Prostate gland (tissue), 2 donors: ENCODE measurements at regions of chr15 and their contacts with region 1.

Region 1: GRCh38 chr15:64841258-64842095 is at the start of gene PLEKHO2:
- DNase-seq: peak; percentile 97
- H3K4me3 ChIP-seq: peak within 1 kb of the TSS; percentile 91 to 96
- H3K27ac ChIP-seq: peak within 1 kb of the TSS; percentile 91 to 93
- H3K4me1 ChIP-seq: peaks cover 12% of the 10 kb centered on the region
- H3K27me3 ChIP-seq: no peaks in the 10 kb centered on the region
- CTCF ChIP-seq: peak in 1 of 4 experiments; percentile 18
- POLR2A ChIP-seq: peak; percentile 80
- total RNA-seq, gene PLEKHO2: 8.6 to 31.8 TPM

Region 2: GRCh38 chr15:64187396-64188191 is 653.9 kb before region 1 on chr15:
- intact Hi-C with region 1: no loop called
- DNase-seq: no peak
- H3K4me3 ChIP-seq: no peak overlapping the region
- H3K27ac ChIP-seq: no peak overlapping the region
- H3K4me1 ChIP-seq: no peaks in the 10 kb centered on the region
- H3K27me3 ChIP-seq: no peaks in the 10 kb centered on the region
- CTCF ChIP-seq: no peak
- POLR2A ChIP-seq: no peak

Region 3: DNA sequence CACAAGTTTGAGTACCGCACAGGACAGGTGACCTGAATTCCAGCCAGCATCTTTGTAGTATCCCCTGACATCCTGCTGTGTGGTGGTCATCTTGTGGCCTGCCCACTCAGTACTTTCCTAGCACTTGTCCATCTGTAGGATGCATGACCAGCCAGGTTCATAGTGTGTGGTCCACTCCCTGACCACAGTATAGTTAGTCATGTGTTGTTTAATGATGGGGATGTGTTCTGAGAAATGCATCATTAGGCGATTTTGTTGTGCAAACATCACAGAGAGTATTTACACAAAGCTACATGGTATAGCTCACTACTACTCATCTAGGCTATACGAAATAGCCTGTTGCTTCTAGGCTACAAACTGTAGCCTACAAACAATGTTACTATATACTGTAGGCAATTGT is 49.2 kb before region 1 on chr15:
- intact Hi-C with region 1: no loop called
- DNase-seq: no peak
- H3K4me3 ChIP-seq: no peak overlapping the region
- H3K27ac ChIP-seq: no peak overlapping the region
- H3K4me1 ChIP-seq: no peaks in the 10 kb centered on the region
- H3K27me3 ChIP-seq: no peaks in the 10 kb centered on the region
- CTCF ChIP-seq: no peak
- POLR2A ChIP-seq: no peak

Region 4: GRCh38 chr15:64895285-64896065 is 54.0 kb after region 1 on chr15:
- intact Hi-C with region 1: loop called (anchors 5 kb)
- DNase-seq: no peak
- H3K4me3 ChIP-seq: peak overlapping the region in 1 of 2 donors; percentile 2
- H3K27ac ChIP-seq: peak overlapping the region; percentile 51 to 67
- H3K4me1 ChIP-seq: peaks cover 3% of the 10 kb centered on the region
- H3K27me3 ChIP-seq: no peaks in the 10 kb centered on the region
- CTCF ChIP-seq: no peak
- POLR2A ChIP-seq: no peak

Region 5: DNA sequence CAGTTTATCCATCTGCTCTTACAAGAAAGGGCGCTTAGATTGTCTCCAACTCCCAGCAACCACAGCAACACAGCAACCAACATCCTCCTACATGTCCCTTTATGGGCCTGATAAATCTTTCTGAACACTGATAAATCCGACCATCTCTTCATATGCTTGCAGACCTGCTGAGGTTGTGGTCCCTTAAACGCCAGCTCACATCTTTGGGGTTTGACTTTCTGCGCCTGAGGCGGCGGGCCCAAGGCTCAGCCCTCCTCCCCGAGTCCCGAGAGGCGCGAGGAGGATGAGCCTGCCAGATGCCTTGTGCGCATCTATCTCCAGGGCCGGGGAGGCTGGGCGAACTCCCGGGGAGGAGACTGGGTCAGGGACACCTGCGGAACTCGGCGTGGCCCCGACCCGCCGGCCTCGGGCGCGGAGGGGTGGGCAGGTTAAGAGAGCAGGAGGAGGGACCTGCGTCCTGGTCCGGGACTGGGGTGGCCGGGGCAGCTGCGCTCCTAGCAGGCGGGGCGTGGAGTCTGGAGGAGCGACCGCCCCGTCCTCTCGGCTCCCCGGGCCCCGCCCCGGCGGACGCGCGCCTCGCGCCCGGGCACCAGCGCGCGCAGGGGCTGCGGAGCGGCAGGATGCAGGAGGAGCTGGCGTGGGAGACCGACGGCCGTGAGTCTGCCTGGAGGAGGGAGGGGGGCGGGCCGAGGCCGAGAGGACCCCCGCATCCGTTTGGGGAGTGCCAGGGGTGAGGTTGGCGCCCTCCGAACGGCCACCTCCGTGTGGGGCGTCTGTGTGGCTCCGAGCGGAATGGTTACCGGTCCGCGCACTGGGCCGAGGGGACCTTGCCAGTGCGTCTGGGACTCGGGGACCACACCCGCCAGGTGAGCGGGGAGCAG is 70.1 kb after region 1 on chr15 and contains the start of gene ANKDD1A:
- intact Hi-C with region 1: loop called (anchors 5 kb)
- DNase-seq: peak; percentile 33
- H3K4me3 ChIP-seq: peak within 1 kb of the TSS; percentile 43 to 45
- H3K27ac ChIP-seq: no peak within 1 kb of the TSS
- H3K4me1 ChIP-seq: peaks cover 3% of the 10 kb centered on the region
- H3K27me3 ChIP-seq: no peaks in the 10 kb centered on the region
- CTCF ChIP-seq: no peak
- POLR2A ChIP-seq: peak; percentile 24
- total RNA-seq, gene ANKDD1A: 3.3 to 23.9 TPM

Region 6: DNA sequence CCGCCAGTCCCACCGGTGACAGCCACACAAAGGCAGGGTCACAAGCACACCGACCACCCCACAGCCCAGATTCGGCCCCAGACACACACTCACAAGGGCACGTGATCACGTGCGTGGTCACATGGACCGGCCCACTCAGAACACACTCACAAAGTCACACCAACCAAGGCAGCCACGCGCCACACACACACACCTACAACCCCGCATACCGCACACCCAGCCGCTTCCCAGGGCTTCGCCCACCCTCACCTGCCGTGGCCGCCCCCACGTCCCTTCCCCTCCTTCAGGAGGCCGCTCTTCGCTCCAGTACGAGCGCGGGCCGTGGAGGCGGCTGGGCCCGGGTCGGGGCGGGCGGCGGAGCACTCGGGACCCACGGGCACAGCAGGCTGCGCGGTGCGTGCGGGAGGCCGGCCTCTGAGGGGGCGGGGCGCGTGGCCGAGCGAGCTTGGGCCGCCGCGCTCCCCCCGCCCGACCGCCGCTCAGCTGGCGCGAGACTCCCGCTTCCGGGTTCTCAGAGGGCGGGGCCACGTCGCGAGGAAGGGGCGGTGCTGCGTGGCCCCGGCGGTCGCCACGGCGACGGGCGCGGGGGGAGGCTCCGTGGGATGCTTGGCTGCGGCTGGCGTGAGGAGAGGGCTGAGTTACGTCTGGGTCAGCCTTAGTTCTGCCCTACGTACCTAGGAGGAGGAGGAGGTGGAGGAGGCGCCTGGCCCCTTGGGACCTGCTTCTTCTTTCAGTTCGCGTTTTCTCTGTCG is 148.1 kb after region 1 on chr15 and contains the start of gene SPG21:
- intact Hi-C with region 1: loop called (anchors 5 kb)
- DNase-seq: peak; percentile 91
- H3K4me3 ChIP-seq: peak within 1 kb of the TSS; percentile 92 to 97
- H3K27ac ChIP-seq: peak within 1 kb of the TSS; percentile 93
- H3K4me1 ChIP-seq: no peaks in the 10 kb centered on the region
- H3K27me3 ChIP-seq: no peaks in the 10 kb centered on the region
- CTCF ChIP-seq: no peak
- POLR2A ChIP-seq: peak; percentile 79
- total RNA-seq, gene SPG21: 95.8 to 98.8 TPM